ENCODE measurements at regions of chr6 and their contacts with region 1.

Region 1: DNA sequence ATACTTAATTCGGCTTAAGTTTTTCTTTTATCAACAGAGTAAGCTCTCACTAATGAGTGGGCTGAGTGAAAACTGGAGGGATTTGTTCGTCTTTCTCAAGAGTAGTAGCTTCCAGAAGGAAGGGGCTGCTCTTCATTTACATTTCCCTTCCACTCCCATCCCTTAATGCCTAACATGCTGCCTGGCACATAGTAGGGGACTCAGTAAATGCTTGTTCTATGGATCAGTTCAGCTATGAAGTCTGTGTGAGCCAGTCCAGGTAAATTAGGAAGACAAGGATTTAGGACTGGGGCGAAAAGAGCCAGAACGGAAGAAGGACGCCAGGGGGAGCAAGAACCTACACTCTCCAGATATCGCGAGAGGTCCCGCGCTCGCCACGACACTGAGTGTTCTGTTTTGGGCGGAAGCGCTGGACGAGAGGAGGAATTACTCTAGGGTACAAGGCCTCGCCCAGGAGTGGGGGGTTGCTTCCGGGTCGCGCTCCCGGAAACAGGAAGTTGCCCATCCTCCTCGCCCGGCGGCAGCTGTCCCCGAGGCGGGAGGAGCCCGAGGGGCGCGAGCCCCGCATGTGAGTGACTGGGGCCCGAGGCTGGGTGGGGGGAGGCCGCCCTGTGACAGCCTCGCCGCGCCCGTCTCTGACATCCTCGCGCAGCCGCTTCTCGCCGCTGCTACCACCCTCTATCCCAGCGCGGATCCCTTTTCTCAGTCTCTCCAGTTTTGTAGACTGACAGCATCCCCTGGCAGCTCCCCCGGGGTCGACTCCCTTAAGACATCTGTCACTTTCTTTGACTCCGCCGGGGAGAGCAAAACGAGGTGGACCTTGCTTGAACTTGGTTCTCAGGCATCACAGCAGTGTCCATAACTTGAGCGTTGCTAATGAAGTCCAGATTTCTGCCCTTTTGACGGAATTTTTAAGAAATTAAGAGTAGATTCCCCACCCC is at the start of gene C6orf89:
- DNase-seq: peak; percentile 99
- ATAC-seq: peak; percentile 100
- H3K4me3 Mint-ChIP-seq: peak within 1 kb of the TSS; percentile 91
- H3K27ac Mint-ChIP-seq: peak within 1 kb of the TSS; percentile 87
- H3K4me1 Mint-ChIP-seq: peaks cover 35% of the 10 kb centered on the region
- H3K27me3 Mint-ChIP-seq: no peaks in the 10 kb centered on the region
- total RNA-seq, gene C6orf89: 40.0 to 41.1 TPM

Region 2: DNA sequence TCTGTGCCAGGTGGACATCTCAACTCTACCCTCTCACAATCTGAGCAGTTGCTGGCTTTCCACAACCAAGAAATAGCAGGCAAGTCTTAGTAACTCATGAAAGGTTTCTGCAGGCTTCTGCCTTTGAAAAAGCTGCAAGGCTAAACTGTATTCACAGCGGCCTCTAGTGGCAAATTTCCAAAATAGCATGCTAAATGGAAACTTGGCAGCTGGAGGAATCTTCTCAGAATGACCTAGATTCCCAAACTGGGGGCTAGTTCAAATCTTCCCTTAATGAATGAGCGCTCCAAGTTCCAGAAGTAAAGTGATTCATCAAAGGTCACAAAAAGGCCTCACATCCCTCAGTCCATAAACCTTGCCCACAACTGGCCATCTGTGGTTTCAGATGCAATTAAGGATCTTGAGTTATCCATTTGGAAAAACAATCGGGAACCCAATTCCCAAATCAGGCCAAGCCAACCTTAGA is 34.5 kb before region 1 on chr6:
- CTCF ChIA-PET with region 1: interaction called, 10 read pairs
- POLR2A ChIA-PET with region 1: no interaction called
- DNase-seq: peak; percentile 68
- ATAC-seq: no peak
- H3K4me3 Mint-ChIP-seq: no peak overlapping the region
- H3K27ac Mint-ChIP-seq: no peak overlapping the region
- H3K4me1 Mint-ChIP-seq: peaks cover 5% of the 10 kb centered on the region
- H3K27me3 Mint-ChIP-seq: no peaks in the 10 kb centered on the region

Region 3: DNA sequence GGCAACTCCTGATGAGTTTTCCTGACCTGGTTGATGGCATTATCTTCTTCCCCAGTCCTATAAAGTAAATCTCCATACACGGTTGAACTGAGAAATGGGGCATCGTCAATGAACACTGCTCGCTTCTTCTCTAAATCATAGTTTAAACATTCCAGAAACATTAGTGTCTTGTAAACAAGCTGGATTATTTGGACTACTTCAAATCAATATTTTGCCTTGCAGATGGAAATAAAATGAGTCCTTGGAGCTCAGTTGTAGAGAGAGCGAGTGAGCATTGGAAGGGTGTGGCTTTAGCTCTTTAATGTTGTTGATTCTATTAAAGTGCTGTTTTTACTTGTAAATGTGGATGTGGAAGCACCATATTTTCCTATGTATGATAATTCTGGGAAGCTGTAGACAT is 18.4 kb after region 1 on chr6:
- CTCF ChIA-PET with region 1: interaction called, 15 read pairs
- POLR2A ChIA-PET with region 1: no interaction called
- DNase-seq: no peak
- ATAC-seq: no peak
- H3K4me3 Mint-ChIP-seq: no peak overlapping the region
- H3K27ac Mint-ChIP-seq: no peak overlapping the region
- H3K4me1 Mint-ChIP-seq: peaks cover 22% of the 10 kb centered on the region
- H3K27me3 Mint-ChIP-seq: no peaks in the 10 kb centered on the region

Region 4: DNA sequence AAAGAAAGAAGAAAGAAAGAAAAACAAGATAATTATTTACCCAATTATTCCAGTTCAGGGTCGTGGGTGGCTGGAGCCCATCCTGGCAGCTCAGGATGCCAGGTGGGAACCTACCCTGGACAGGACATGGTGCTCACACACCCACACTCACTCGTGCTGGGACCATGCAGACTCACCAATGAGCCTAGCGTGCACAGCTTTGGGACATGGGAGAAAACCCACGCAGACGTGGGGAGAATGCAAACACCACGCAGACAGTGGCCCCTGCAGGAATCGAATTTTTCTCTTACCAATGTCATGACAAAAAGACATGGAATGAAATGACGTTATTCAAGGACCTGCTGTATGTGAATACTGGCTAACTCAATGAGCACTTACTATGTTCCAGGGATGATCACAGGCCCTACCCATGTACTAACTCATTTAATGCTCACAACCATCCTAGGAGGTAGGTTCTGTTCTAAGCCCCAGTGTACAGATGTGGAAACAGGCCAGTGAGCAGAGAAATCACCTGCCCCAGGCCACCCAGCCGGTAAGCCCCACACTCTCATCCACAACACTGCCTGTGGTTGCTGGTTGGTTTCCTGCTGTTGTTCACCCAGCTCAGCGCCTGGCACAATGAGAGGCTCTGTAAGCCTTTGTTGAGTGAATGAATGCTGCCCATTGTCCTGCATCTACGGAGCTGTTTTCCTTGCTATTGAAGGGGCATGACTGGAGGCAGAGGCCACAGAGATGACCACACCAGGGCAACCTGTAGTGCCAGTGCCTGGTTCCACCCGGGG is 62.0 kb after region 1 on chr6:
- CTCF ChIA-PET with region 1: interaction called, 14 read pairs
- POLR2A ChIA-PET with region 1: no interaction called
- DNase-seq: peak; percentile 70
- ATAC-seq: peak; percentile 96
- H3K4me3 Mint-ChIP-seq: no peak overlapping the region
- H3K27ac Mint-ChIP-seq: peak overlapping the region; percentile 52
- H3K4me1 Mint-ChIP-seq: peaks cover 37% of the 10 kb centered on the region
- H3K27me3 Mint-ChIP-seq: peaks cover 19% of the 10 kb centered on the region

Region 5: DNA sequence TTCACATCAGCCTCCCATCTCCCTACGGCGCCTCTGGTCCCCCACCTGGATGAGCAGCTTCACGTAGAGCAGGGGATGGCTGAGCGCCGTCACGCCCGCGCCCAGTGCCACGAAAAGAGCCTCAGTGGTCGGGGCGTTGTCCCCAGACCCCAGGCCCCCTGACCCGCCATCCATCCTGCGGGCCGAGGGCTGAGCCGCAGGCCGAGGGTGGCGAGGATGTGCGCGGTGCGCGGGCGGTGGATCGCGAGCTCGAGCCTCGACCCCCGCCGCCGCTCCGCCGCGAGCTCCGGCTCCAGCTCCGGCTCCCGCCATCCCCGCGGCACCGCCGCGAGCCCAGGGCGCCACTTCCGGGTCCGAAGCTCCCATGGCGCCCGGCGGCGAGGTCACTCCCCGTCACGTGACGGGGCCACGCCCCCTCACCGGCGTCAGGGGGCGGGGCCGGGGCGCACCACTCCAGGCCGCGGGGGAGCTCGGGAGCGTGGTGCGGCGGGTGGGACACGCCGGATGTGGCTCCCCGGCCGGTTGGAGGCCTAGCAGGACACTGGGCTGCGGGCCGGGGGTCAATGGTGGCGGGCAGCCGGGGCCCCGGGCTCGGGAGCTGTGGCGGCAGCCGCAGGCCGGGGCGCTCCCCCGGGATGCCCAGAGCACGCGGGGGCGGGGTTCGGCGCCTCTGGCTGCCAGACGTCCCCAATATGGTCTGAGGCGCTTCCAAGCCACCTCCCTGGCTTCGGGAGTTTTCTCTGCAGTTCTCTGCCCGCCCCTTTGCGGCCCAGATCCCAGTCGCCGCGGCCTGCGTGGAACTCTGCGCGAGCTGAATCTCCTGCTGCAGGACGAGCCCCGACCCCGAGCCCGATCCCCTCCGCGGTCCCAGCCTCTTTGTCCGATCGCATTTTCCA is 100.3 kb after region 1 on chr6 and contains the start of gene MTCH1:
- CTCF ChIA-PET with region 1: interaction called, 37 read pairs
- POLR2A ChIA-PET with region 1: interaction called, 8 read pairs
- DNase-seq: peak; percentile 89
- ATAC-seq: peak; percentile 92
- H3K4me3 Mint-ChIP-seq: peak within 1 kb of the TSS; percentile 98
- H3K27ac Mint-ChIP-seq: peak within 1 kb of the TSS; percentile 96
- H3K4me1 Mint-ChIP-seq: peaks cover 25% of the 10 kb centered on the region
- H3K27me3 Mint-ChIP-seq: peaks cover 12% of the 10 kb centered on the region
- total RNA-seq, gene MTCH1: 117 to 122 TPM

Region 6: GRCh38 chr6:38702558-38703397 is 1817.0 kb after region 1 on chr6 and contains the start of gene GLO1:
- CTCF ChIA-PET with region 1: no interaction called
- POLR2A ChIA-PET with region 1: no interaction called
- DNase-seq: peak; percentile 97
- ATAC-seq: peak; percentile 100
- H3K4me3 Mint-ChIP-seq: peak within 1 kb of the TSS; percentile 85
- H3K27ac Mint-ChIP-seq: peak within 1 kb of the TSS; percentile 85
- H3K4me1 Mint-ChIP-seq: peaks cover 34% of the 10 kb centered on the region
- H3K27me3 Mint-ChIP-seq: peaks cover 9% of the 10 kb centered on the region
- total RNA-seq, gene GLO1: 68.8 to 69.8 TPM

Measured in activated CD8-positive, alpha-beta T cell treated with anti-CD3 and anti-CD28 coated beads, Interleukin-2, amount 10 ng/mL, durations not matched to agents 7 days and 5 days (primary cell).